Head of caudate nucleus (tissue), 42 donors: ENCODE measurements at regions of chr12 and their contacts with region 1.

Region 1: GRCh38 chr12:12786716-12787601 is 1.5 kb downstream of the APOLD1 start:
- DNase-seq: peak; percentile 30 to 88 (median 78)

Region 2: GRCh38 chr12:12736759-12737676 is 49.9 kb before region 1 on chr12:
- intact Hi-C with region 1: loop called (anchors 10 kb)
- DNase-seq: peak in 11 of 42 donors; percentile 17 to 70 (median 40)

Region 3: DNA sequence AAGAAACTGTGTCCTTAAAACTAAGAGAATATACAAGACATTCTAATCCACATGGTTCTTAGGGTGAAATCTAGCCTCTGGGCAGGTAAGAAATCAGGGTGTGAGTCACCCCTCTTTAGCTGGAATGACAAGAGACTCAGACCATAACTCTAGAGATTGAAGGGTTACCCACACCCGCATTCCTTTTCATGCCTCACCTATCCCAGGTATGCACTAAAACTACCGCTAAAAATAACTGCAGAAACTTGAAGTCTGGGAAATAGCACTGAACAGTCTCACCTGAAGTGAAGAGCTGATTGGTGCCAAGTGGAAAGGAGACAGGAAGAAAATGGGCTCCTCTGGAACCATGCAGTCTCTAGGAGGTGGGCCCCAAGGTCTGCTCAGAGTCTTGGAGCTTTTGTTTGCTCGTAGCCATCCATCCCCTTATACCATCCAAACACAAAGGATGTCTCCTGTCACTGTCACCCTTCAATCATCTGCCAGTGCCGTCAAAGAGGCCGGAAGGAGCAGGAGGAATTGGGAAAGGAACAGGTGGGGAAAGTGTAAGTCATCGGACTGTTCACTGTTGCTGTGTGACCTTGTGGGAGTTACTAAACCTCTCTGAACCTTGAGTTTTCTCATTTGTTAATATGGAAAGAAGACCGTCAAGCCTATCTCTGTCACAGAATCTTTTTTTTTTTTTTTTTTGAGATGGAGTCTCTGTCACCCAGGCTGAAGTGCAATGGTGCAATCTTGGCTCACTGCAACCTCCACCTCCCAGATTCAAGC is 48.6 kb after region 1 on chr12:
- intact Hi-C with region 1: no loop called
- DNase-seq: no peak